ENCODE measurements at regions of chr1 and their contacts with region 1.

Region 1: GRCh38 chr1:235971571-235972310 is 93.1 kb downstream of the NID1 start:
- DNase-seq: peak; percentile 88
- CTCF ChIP-seq: peak; percentile 83

Region 2: DNA sequence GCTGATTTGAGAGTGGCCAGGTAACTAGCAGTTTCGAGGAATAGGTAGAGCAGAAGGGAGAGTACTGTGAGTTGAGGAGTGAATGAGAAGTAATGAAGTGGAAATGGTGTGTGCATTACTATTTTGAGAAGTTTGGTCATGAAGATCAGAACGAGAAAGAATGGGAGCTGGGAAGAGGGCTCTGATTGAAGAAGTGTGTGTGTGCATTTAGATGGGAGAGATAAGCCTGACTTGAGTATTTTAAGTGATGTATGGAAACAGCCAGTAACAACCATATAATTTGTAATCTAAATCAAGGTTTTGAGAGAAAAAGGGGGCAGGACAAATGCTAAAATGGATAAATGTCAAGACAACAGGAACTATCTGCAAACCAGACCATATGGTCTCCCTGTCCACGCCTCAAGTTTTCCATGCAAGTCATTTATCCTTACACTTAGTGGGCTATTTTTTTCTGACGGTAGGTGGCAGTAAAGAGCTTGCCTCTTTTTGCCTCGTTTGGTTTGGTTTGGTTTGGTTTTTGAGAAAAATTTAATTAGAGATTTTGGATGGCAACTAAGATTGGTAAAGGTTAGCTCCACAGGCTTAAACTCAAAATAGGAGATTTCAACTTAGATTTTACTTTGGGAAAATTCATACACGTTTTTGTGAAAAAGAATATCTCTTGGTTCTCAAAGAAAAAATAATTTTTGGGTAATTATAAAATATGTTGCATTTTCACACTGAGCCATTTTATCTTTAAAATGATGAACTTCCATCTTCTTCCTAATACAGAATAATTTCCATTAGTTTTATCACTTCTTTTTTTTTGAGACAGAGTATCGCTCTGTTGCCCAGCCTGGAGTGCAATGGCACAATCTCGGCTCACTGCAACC is 458.0 kb before region 1 on chr1:
- CTCF ChIA-PET with region 1: interaction called, 12 read pairs
- POLR2A ChIA-PET with region 1: no interaction called
- DNase-seq: peak; percentile 32
- CTCF ChIP-seq: peak; percentile 73

Region 3: GRCh38 chr1:235866913-235867845 is 104.6 kb before region 1 on chr1:
- CTCF ChIA-PET with region 1: interaction called, 38 read pairs
- POLR2A ChIA-PET with region 1: no interaction called
- DNase-seq: peak; percentile 98
- CTCF ChIP-seq: no peak

Region 4: DNA sequence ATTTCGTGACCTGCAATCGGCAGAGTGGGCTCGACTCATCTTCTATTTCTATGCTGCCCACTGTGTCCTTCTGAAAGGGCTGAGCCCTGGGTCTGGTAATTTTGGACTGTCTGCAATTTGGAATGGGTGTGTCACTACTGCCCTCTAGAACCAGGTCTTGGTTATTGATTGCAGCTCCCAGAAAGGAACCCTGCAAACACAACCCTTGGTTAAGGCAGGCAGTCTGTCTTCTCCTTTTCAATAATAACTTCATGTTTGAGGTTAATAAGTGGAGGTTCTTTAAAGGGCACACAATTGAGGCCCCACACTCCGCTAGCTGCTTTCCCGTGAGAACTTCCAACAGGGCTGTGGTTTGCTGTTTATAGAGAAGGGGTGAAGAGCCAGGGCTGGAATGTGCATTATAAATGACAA is 25.2 kb before region 1 on chr1:
- CTCF ChIA-PET with region 1: interaction called, 13 read pairs
- POLR2A ChIA-PET with region 1: no interaction called
- DNase-seq: peak; percentile 49
- CTCF ChIP-seq: peak; percentile 62

Region 5: DNA sequence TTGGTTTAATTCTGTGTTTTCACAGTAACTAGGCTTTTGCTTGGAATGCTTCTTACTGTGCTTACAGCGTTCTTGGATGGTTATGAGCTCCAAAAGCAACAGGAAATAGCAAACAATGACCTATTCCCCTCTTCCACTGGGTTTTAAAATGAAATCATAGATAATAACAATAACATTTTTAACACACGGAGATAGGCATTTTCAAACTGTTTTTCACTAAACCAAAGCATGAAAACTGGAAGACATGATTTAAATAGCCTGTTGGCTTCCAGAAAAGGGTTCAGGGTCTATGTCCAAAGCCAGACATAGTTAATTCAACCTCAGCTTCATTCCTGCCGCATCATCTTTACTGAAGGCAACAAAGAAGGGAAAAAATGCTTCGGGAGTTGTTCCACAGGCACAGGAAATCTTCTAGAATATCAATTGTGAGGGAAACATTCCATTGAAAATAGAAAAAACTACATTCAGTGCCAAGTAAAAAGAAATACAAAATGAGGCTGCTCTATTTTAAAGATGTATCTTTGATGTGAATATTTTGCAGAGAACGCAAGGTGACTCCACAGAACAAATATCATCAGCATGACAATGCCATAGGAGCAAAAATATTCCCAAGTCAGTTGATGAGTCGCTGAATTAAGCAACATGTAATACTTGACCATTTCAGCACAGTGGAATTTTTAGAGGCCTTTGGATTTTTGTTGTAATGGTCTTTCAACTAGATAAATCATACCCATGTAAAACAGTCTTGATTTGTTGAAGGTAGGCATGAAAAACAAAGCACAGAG is 12.5 kb after region 1 on chr1:
- CTCF ChIA-PET with region 1: interaction called, 26 read pairs
- POLR2A ChIA-PET with region 1: no interaction called
- DNase-seq: no peak
- CTCF ChIP-seq: no peak

Region 6: GRCh38 chr1:236206548-236206947 is 234.8 kb after region 1 on chr1:
- CTCF ChIA-PET with region 1: no interaction called
- POLR2A ChIA-PET with region 1: no interaction called
- DNase-seq: no peak
- CTCF ChIP-seq: no peak

Measured in GM10248 (cell line).